ENCODE measurements at regions of chr6 and their contacts with region 1.

Region 1: DNA sequence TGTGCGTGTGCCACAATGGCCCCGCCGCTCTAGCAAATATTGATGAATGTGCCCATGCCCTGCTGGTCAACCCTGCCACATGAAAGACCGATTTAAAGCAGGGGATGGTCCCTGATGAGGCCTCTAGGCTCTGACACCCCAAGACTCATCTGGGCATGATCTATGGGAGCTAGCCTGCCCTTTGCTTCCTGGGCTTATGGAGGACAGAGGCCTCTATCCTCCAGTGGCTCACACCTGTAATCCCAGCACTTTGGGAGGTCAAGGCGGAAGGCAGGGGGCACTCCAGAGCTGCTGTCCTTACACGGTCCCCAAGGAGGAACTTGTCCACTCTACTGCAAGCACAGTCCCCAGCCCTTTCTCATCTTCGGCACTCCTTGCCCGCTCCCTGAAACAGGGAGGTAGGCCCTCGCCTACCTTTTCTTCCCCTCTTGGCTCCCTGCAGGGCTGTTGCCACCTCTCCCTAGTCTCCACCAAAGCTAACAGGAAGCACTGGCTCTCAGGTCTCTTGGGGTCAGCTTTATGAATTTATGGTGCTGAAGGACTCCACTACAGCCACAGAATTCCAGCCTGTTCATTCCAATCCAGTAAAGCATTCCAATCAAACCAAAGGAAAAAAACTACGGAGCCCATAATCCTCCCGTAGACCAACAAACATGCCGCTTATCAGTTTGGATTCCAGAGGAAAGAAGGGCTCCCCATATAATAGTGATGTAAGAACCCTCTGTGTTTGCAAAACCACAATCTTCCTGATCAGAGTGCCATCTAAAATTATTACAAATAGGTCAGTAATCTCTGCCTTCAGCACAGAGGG is 48.7 kb upstream of the FOXQ1 start:
- H3K4me3 Mint-ChIP-seq: no peak overlapping the region
- H3K27ac Mint-ChIP-seq: no peak overlapping the region
- H3K4me1 Mint-ChIP-seq: peaks cover 8% of the 10 kb centered on the region
- H3K27me3 Mint-ChIP-seq: peaks cover 48% of the 10 kb centered on the region

Region 2: DNA sequence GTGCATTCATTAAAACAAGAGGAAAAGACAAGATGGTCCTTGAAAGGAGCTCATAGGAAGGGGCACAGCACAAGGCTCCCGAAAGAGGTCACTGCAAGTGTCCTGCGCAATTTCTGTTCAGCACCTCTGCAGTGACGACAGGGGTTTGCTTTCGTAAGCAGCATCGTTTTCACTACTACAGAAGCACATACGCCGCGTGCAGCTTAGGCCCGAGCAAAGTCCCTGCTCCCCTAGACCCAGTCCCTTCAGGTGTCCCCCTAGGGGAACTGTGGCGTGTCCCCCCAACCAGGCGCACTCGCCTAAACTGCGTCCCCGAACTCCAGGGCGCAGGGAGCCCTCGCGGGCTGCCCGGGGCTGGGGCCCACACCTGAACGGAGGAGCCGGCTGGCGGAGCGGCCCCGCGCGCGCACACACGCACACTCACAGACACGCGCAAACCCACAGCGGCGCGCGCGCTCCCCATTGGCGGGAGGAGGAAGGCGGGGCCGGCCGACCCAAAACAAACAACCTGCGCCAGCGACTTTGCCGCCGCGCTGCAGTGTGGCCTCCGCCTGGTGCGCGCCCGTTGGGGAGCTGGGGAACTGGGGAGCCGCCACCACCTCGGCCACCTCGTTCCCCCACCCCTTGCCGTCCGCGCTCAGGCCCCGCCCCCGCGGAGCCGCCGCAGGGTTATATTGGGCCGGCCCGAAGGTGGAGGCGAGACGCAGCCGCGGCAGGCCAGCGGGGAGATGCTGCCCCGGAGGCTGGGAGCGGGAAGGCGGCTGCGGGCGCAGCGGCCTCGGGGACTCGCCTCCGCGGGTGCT is 48.4 kb after region 1 on chr6 and contains the start of gene FOXQ1:
- intact Hi-C with region 1: loop called (anchors 2 kb)
- H3K4me3 Mint-ChIP-seq: peak within 1 kb of the TSS; percentile 92
- H3K27ac Mint-ChIP-seq: peak within 1 kb of the TSS; percentile 85
- H3K4me1 Mint-ChIP-seq: peaks cover 42% of the 10 kb centered on the region
- H3K27me3 Mint-ChIP-seq: peaks cover 75% of the 10 kb centered on the region

Region 3: GRCh38 chr6:1381481-1382330 is 118.5 kb after region 1 on chr6:
- intact Hi-C with region 1: loop called (anchors 1 kb)
- H3K4me3 Mint-ChIP-seq: peak overlapping the region; percentile 32
- H3K27ac Mint-ChIP-seq: no peak overlapping the region
- H3K4me1 Mint-ChIP-seq: peaks cover 28% of the 10 kb centered on the region
- H3K27me3 Mint-ChIP-seq: peaks cover 97% of the 10 kb centered on the region